Dendritic cell treated with granulocyte-macrophage colony-stimulating factor and Interleukin-4, amounts not matched to agents 40 ng/mL and 50 ng/mL, for 4 days (primary cell): ENCODE measurements at regions of chr11 and their contacts with region 1.

Region 1: GRCh38 chr11:86218125-86219084 is 26.1 kb upstream of the EED start:
- H3K4me3 Mint-ChIP-seq: peak overlapping the region; percentile 6
- H3K27ac Mint-ChIP-seq: peak overlapping the region; percentile 64
- H3K4me1 Mint-ChIP-seq: peaks cover 54% of the 10 kb centered on the region
- H3K27me3 Mint-ChIP-seq: no peaks in the 10 kb centered on the region

Region 2: GRCh38 chr11:85854557-85855340 is 363.7 kb before region 1 on chr11:
- intact Hi-C with region 1: loop called (anchors 5 kb)
- H3K4me3 Mint-ChIP-seq: peak overlapping the region; percentile 87
- H3K27ac Mint-ChIP-seq: peak overlapping the region; percentile 97
- H3K4me1 Mint-ChIP-seq: peaks cover 16% of the 10 kb centered on the region
- H3K27me3 Mint-ChIP-seq: no peaks in the 10 kb centered on the region

Region 3: GRCh38 chr11:85941380-85941973 is 276.9 kb before region 1 on chr11:
- intact Hi-C with region 1: loop called (anchors 10 kb)
- H3K4me3 Mint-ChIP-seq: no peak overlapping the region
- H3K27ac Mint-ChIP-seq: no peak overlapping the region
- H3K4me1 Mint-ChIP-seq: peaks cover 14% of the 10 kb centered on the region
- H3K27me3 Mint-ChIP-seq: no peaks in the 10 kb centered on the region

Region 4: DNA sequence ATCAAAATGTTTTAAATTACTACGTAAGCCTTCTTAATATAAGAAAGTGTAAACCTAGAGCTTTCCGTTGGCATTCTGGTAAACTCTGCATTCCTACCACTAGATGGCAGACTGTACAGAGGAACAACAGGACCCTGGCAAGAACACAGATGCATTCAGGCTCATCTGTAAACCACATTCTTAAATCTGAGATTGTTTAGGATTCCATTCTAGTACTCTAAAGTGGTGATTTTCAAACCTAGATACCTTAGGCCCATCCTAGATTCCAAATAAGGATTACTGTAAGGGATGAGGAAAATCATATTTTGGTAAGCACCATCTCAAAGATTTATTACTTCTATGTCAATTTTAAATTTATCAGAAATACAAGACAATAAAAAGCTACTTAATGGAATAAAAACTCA is 176.4 kb before region 1 on chr11:
- intact Hi-C with region 1: loop called (anchors 2 kb)
- H3K4me3 Mint-ChIP-seq: peak overlapping the region; percentile 49
- H3K27ac Mint-ChIP-seq: peak overlapping the region; percentile 61
- H3K4me1 Mint-ChIP-seq: peaks cover 76% of the 10 kb centered on the region
- H3K27me3 Mint-ChIP-seq: no peaks in the 10 kb centered on the region

Region 5: DNA sequence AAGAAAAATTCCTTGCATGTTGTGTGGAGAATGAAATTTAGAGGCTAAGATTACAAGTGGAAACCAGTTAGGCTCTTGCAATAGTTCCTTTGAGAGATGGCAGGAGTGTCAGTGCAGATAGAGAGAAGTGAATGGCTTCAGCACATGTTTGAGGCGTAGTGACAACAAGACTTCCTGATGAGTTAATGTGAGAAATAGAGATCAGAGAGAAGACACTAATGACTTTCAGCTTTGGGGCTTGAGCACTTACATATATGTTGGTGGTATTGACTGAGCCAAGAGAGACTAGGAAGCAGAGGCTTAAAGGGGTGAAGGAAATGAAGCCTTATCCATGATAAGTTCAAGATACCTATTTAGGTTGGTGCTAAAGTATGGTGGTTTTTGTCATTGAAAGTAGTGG is 93.6 kb before region 1 on chr11:
- intact Hi-C with region 1: no loop called
- H3K4me3 Mint-ChIP-seq: no peak overlapping the region
- H3K27ac Mint-ChIP-seq: no peak overlapping the region
- H3K4me1 Mint-ChIP-seq: peaks cover 41% of the 10 kb centered on the region
- H3K27me3 Mint-ChIP-seq: no peaks in the 10 kb centered on the region

Region 6: GRCh38 chr11:86202013-86202336 is 16.4 kb before region 1 on chr11:
- intact Hi-C with region 1: loop called (anchors 2 kb)
- H3K4me3 Mint-ChIP-seq: no peak overlapping the region
- H3K27ac Mint-ChIP-seq: no peak overlapping the region
- H3K4me1 Mint-ChIP-seq: peaks cover 28% of the 10 kb centered on the region
- H3K27me3 Mint-ChIP-seq: no peaks in the 10 kb centered on the region